ENCODE measurements at regions of chr5 and their contacts with region 1.

Region 1: DNA sequence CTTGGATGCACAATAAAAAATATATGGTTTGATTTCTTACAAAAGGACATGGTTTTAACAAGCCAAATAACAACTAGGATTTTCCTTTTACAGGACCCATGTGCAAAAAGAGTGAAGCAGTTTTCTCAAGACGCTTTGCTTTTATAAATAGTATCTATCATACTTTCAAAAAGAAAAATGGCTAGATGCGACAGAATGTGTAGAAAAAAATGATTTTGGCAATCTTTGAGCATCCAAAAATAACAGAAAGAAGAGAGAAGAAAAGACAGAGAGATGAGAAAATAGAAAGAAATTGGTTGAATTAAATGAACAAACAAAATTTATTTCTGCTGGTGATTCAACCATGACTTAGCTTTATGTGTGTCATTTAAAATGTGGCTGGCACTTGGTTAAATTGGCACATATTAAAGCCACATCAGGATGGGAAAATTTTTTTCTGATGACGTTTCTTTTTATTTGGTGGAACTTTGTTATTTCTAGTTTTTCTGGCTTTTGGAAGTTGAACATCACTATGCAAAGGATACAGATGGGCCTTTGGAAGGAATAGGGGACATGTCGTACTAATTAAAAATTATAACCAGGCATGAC is 35.6 kb upstream of the NREP start:
- DNase-seq: no peak
- H3K4me3 ChIP-seq: no peak overlapping the region
- H3K27ac ChIP-seq: no peak overlapping the region
- H3K4me1 ChIP-seq: no peaks in the 10 kb centered on the region
- H3K27me3 ChIP-seq: no peaks in the 10 kb centered on the region
- CTCF ChIP-seq: no peak

Region 2: DNA sequence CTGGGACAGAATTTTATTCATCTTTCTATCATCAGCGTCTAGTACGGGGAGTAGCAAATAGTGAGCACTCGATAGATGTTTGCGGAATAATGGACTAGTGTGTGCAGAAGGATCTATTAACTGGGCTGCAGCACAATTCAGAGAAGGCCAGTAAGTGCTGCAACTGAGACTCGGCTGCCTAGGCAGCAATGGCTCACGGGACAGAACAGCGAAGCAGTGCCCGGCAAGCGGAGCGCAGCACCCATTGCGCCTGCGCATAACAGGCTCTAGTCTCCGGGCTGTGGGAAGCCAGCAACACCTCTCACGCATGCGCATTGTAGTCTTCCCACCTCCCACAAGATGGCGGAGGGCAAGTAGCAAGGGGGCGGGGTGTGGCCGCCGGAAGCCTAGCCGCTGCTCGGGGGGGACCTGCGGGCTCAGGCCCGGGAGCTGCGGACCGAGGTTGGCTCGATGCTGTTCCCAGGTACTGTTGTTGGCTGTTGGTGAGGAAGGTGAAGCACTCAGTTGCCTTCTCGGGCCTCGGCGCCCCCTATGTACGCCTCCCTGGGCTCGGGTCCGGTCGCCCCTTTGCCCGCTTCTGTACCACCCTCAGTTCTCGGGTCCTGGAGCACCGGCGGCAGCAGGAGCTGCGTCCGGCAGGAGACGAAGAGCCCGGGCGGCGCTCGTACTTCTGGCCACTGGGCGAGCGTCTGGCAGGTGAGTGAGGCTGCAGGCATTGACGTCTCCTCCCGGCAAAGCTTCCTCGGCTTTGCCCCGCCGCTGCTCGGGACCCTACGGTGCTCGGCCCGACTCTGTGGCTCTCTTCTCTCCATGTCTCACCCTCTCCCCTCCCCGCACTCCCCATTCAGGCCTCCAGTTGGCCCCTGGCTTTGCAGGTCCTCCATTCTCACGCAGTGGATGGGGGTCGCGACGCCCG is 914.9 kb after region 1 on chr5:
- CTCF ChIA-PET with region 1: no interaction called
- POLR2A ChIA-PET with region 1: interaction called, 12 read pairs
- intact Hi-C with region 1: no loop called
- DNase-seq: peak; percentile 99
- H3K4me3 ChIP-seq: peak overlapping the region; percentile 85
- H3K27ac ChIP-seq: peak overlapping the region; percentile 88
- H3K4me1 ChIP-seq: peaks cover 7% of the 10 kb centered on the region
- H3K27me3 ChIP-seq: no peaks in the 10 kb centered on the region
- CTCF ChIP-seq: no peak

Measured in A673 (cell line).